A673 (cell line): ENCODE measurements at regions of chr19 and their contacts with region 1.

Region 1: DNA sequence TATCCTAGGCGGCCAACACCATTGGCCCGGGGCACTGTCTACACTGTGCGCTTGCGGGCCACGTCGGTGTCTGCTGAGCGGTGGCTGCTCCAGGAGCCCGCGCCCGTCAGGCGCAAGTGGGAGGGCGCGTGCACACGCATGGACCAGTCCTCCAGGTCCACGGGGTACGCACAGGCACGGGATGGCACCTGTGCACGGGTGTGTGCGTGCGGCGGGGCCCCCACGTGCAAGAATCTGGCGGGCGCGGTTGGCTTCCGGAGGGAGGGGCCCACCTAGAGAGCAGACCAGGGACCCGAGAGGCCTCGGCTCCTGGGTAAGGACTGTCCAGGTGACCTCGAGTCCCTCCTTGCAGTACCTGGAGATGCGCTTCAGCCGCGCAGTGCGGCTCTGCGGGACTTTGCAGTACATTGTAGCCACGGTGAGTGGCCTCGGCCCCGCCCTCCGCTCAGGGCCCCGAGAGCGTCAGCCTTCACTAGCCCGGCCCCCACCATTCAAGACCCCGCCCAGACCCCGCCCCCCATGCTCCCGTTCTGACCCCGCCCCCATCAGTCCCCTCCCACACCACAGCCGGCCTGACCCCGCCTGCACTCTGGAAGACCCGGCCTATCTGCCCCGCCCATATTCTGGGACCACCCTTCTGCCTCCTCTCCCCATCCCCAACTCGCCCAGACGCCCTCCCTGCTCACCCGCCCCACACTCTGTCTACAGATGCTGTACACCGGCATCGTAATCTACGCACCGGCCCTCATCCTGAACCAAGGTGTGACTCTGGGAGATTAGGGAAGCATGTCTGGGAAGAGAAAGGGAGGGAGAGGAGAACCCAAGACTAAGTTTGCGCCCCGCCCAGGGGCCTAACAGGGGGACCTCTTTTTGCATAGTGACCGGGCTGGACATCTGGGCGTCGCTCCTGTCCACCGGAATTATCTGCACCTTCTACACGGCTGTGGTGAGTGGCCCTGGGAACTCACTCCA is 2.3 kb downstream of the SLC5A5 start:
- DNase-seq: peak; percentile 75
- H3K4me3 ChIP-seq: peak overlapping the region; percentile 31
- H3K27ac ChIP-seq: no peak overlapping the region
- H3K4me1 ChIP-seq: peaks cover 5% of the 10 kb centered on the region
- H3K27me3 ChIP-seq: peaks cover 46% of the 10 kb centered on the region
- CTCF ChIP-seq: no peak

Region 2: GRCh38 chr19:17932485-17933338 is 58.6 kb after region 1 on chr19 and contains the start of gene CCDC124:
- CTCF ChIA-PET with region 1: interaction called, 9 read pairs
- POLR2A ChIA-PET with region 1: no interaction called
- intact Hi-C with region 1: loop called (anchors 5 kb)
- DNase-seq: peak; percentile 95
- H3K4me3 ChIP-seq: peak within 1 kb of the TSS; percentile 85
- H3K27ac ChIP-seq: peak within 1 kb of the TSS; percentile 97
- H3K4me1 ChIP-seq: peaks cover 11% of the 10 kb centered on the region
- H3K27me3 ChIP-seq: no peaks in the 10 kb centered on the region
- CTCF ChIP-seq: peak; percentile 98
- total RNA-seq, gene CCDC124: 131 and 135 TPM in 2 replicates

Region 3: GRCh38 chr19:18000935-18001778 is 127.1 kb after region 1 on chr19:
- CTCF ChIA-PET with region 1: no interaction called
- POLR2A ChIA-PET with region 1: no interaction called
- intact Hi-C with region 1: loop called (anchors 5 kb)
- DNase-seq: peak; percentile 92
- H3K4me3 ChIP-seq: peak overlapping the region; percentile 72
- H3K27ac ChIP-seq: peak overlapping the region; percentile 91
- H3K4me1 ChIP-seq: peaks cover 13% of the 10 kb centered on the region
- H3K27me3 ChIP-seq: no peaks in the 10 kb centered on the region
- CTCF ChIP-seq: no peak

Region 4: DNA sequence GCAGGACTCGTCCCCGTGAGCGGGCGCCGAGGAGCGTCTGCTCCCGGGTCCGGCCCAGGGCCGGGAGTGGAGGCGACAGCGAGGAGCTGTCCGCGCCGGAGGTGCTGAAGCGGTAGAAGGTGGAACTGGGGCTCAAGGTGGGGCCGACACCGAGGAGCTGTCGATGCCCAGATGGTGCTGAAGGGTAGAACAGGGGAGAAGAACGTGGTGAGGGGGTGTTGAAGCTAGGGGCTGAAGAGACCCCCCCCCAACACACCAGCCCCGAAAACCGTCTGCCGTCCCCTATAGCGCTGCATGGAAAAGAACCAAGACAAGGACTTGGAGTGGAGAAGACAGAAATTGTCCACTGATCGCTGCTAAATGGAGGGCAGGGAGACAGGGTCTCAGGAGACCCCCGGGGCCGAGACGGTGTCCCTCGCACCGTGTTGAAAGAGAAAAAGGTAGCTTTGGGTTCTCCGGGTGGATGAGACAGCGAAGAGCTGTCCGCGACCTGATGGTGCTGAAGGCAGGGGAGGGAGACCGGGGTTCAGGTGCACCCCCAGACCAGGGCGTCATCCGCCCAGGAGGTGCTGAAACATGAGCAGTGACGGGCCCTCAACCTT is 359.3 kb after region 1 on chr19:
- CTCF ChIA-PET with region 1: interaction called, 10 read pairs
- POLR2A ChIA-PET with region 1: no interaction called
- intact Hi-C with region 1: no loop called
- DNase-seq: peak; percentile 72
- H3K4me3 ChIP-seq: no peak overlapping the region
- H3K27ac ChIP-seq: no peak overlapping the region
- H3K4me1 ChIP-seq: peaks cover 15% of the 10 kb centered on the region
- H3K27me3 ChIP-seq: no peaks in the 10 kb centered on the region
- CTCF ChIP-seq: no peak